ENCODE measurements at regions of chr3 and their contacts with region 1.

Region 1: GRCh38 chr3:141561426-141562034 is 74.7 kb downstream of the RASA2 start:
- DNase-seq: peak in 7 of 9 donors; percentile 59 to 78 (median 73)
- ATAC-seq: peak; percentile 80
- H3K4me3 ChIP-seq: no peak overlapping the region
- H3K4me3 Mint-ChIP-seq: peak overlapping the region in 4 of 10 donors; percentile 17 to 54 (median 32)
- H3K27ac ChIP-seq: peak overlapping the region; percentile 25
- H3K27ac Mint-ChIP-seq: peak overlapping the region in 8 of 9 donors; percentile 55 to 89 (median 76)
- H3K4me1 ChIP-seq: peaks cover 0 to 37% of the 10 kb centered on the region in 2 donors
- H3K4me1 Mint-ChIP-seq: peaks cover 11 to 47% (median 24%) of the 10 kb centered on the region in 7 donors
- H3K27me3 ChIP-seq: no peaks in the 10 kb centered on the region
- H3K27me3 Mint-ChIP-seq: no peaks in the 10 kb centered on the region

Region 2: DNA sequence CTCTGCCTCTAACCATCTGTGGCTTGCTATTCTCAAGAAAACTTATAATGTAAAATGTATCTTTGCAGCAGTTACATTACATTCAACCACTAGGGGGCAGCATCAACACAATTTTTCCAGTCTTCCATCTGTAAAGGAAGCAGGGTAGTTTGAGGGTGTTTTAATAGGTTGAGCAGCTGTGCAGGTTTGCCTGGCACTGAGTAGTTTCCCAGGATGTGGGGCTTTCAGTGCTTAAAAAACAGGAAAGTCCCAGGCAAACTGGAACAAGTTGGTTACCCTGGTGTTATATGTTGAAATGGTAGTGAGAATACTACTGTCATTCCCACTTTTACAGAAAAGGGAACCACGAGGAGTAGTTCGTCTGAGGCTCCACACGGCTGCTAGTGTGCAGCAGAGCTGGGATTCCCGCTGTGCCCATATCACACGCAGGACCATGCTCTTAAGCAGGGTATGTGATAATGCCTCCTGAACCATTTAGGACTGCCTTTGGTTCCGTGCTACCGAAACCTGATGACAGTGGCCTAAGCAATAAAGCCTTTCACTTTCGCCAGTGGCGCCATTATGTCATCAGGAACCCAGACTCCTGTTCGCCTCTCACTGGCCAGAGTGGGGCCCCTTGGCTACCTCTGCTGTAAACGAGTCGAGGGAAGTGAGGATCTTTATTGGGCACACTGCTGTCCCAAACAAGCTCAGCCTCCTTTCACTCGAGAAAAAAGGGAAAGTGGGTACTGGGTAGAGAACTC is 257.9 kb before region 1 on chr3:
- CTCF ChIA-PET with region 1: interaction called, 4 read pairs
- POLR2A ChIA-PET with region 1: no interaction called
- intact Hi-C with region 1: loop called (anchors 1 to 2 kb)
- DNase-seq: peak in 7 of 9 donors; percentile 62 to 84 (median 77)
- ATAC-seq: peak; percentile 77
- H3K4me3 ChIP-seq: no peak overlapping the region
- H3K4me3 Mint-ChIP-seq: peak overlapping the region in 1 of 10 donors; percentile 3
- H3K27ac ChIP-seq: no peak overlapping the region
- H3K27ac Mint-ChIP-seq: peak overlapping the region in 5 of 9 donors; percentile 4 to 84 (median 50)
- H3K4me1 ChIP-seq: peaks cover 20 to 57% of the 10 kb centered on the region in 2 donors
- H3K4me1 Mint-ChIP-seq: peaks cover 30 to 90% (median 80%) of the 10 kb centered on the region in 7 donors
- H3K27me3 ChIP-seq: no peaks in the 10 kb centered on the region
- H3K27me3 Mint-ChIP-seq: peaks cover 0 to 5% (median 0%) of the 10 kb centered on the region in 5 donors

Region 3: DNA sequence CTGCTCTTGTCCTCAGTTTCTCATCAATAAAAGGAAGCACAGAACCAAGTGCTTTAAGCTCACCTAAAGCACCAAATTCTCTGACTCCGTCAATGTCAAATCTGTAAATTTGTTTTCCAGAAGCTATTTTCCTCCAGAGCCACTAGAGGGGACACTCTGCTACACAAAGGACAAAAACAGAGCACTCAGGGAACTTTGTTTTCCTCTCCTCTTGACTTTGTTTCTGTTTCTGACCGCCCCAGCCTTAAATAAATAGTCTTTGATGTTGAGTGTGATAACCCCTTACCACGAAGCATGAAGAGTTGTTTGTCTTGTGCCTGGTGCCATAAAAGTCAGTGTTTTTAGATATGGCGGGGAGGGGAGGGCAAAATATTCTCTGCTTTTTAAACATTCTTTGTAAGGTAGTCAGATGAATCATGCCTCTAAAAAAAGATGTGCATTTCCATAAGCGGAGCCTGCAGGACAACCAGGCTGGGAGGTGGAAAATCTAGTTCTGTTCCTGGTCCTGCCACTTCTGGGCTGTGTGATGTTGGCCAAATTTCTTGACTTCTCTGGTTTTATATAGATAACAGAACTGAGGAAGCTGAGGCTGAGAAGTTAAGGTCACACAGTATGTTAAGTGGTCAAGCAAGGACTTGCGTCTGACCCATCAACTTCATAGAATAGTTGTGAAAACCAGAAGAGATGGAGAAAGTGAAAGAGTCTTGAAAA is 200.5 kb before region 1 on chr3:
- CTCF ChIA-PET with region 1: interaction called, 3 read pairs
- POLR2A ChIA-PET with region 1: interaction called, 3 read pairs
- intact Hi-C with region 1: loop called in 1 of 2 experiments (anchors 1 kb)
- DNase-seq: peak in 7 of 9 donors; percentile 20 to 56 (median 45)
- ATAC-seq: peak; percentile 83
- H3K4me3 ChIP-seq: no peak overlapping the region
- H3K4me3 Mint-ChIP-seq: peak overlapping the region in 4 of 10 donors; percentile 16 to 40 (median 28)
- H3K27ac ChIP-seq: no peak overlapping the region
- H3K27ac Mint-ChIP-seq: peak overlapping the region in 2 of 9 donors; percentile 26 to 51
- H3K4me1 ChIP-seq: no peaks in the 10 kb centered on the region
- H3K4me1 Mint-ChIP-seq: peaks cover 5 to 9% (median 7%) of the 10 kb centered on the region in 7 donors
- H3K27me3 ChIP-seq: no peaks in the 10 kb centered on the region
- H3K27me3 Mint-ChIP-seq: peaks cover 0 to 11% (median 0%) of the 10 kb centered on the region in 5 donors

Region 4: GRCh38 chr3:141471160-141471559 is 90.4 kb before region 1 on chr3:
- CTCF ChIA-PET with region 1: interaction called, 64 read pairs
- POLR2A ChIA-PET with region 1: interaction called, 11 read pairs
- intact Hi-C with region 1: loop called (anchors 1 kb)
- DNase-seq: no peak
- ATAC-seq: no peak
- H3K4me3 ChIP-seq: no peak overlapping the region
- H3K4me3 Mint-ChIP-seq: no peak overlapping the region
- H3K27ac ChIP-seq: no peak overlapping the region
- H3K27ac Mint-ChIP-seq: no peak overlapping the region
- H3K4me1 ChIP-seq: peaks cover 4 to 5% of the 10 kb centered on the region in 2 donors
- H3K4me1 Mint-ChIP-seq: peaks cover 4 to 21% (median 18%) of the 10 kb centered on the region in 7 donors
- H3K27me3 ChIP-seq: no peaks in the 10 kb centered on the region
- H3K27me3 Mint-ChIP-seq: peaks cover 0 to 11% (median 0%) of the 10 kb centered on the region in 5 donors

Region 5: GRCh38 chr3:141477224-141477623 is 84.3 kb before region 1 on chr3:
- CTCF ChIA-PET with region 1: interaction called, 64 read pairs
- POLR2A ChIA-PET with region 1: interaction called, 11 read pairs
- intact Hi-C with region 1: loop called (anchors 1 kb)
- DNase-seq: no peak
- ATAC-seq: no peak
- H3K4me3 ChIP-seq: no peak overlapping the region
- H3K4me3 Mint-ChIP-seq: no peak overlapping the region
- H3K27ac ChIP-seq: no peak overlapping the region
- H3K27ac Mint-ChIP-seq: no peak overlapping the region
- H3K4me1 ChIP-seq: peaks cover 11% of the 10 kb centered on the region in 2 donors
- H3K4me1 Mint-ChIP-seq: peaks cover 24 to 46% (median 32%) of the 10 kb centered on the region in 7 donors
- H3K27me3 ChIP-seq: no peaks in the 10 kb centered on the region
- H3K27me3 Mint-ChIP-seq: peaks cover 0 to 21% (median 0%) of the 10 kb centered on the region in 5 donors

Region 6: DNA sequence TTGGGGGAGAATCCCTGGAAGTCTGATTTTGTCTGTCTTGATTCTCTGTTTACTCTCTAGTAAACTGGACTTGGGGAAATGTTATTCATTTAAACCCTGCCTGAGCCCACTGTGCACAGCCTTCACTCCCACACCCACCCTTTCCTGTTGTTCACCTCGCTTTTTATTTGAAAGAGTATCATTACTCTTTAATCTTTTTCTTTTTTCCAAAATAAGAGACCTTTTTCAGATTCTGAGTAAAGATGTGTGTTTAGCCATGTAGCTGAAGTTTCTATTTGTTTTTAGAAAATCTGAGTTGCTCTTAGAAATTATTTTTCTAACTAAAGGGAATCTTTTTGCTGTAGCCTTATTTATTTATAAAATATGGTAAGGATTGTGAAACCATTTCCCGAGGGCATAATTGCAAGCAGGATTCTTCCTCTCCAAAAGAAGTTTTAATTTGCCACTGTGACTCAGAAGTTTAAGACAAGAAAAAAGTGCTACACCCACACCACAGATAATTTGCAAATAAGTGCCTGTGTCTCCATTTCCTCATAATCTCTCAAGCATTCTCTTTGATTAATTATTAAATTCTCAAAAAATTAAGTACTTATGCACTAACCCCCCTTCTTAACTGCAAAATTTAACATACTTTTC is 31.3 kb before region 1 on chr3:
- CTCF ChIA-PET with region 1: interaction called, 4 read pairs
- POLR2A ChIA-PET with region 1: interaction called, 3 read pairs
- intact Hi-C with region 1: loop called in 1 of 2 experiments (anchors 1 kb)
- DNase-seq: peak in 6 of 9 donors; percentile 44 to 74 (median 60)
- ATAC-seq: peak; percentile 87
- H3K4me3 ChIP-seq: peak overlapping the region; percentile 4
- H3K4me3 Mint-ChIP-seq: peak overlapping the region; percentile 40 to 94 (median 82)
- H3K27ac ChIP-seq: peak overlapping the region; percentile 62
- H3K27ac Mint-ChIP-seq: peak overlapping the region in 8 of 9 donors; percentile 87 to 97 (median 94)
- H3K4me1 ChIP-seq: peaks cover 22 to 77% of the 10 kb centered on the region in 2 donors
- H3K4me1 Mint-ChIP-seq: peaks cover 40 to 86% (median 83%) of the 10 kb centered on the region in 7 donors
- H3K27me3 ChIP-seq: no peaks in the 10 kb centered on the region
- H3K27me3 Mint-ChIP-seq: no peaks in the 10 kb centered on the region

Region 7: GRCh38 chr3:141632779-141633374 is 71.3 kb after region 1 on chr3:
- CTCF ChIA-PET with region 1: no interaction called
- POLR2A ChIA-PET with region 1: no interaction called
- intact Hi-C with region 1: no loop called
- DNase-seq: no peak
- ATAC-seq: no peak
- H3K4me3 ChIP-seq: no peak overlapping the region
- H3K4me3 Mint-ChIP-seq: no peak overlapping the region
- H3K27ac ChIP-seq: no peak overlapping the region
- H3K27ac Mint-ChIP-seq: no peak overlapping the region
- H3K4me1 ChIP-seq: no peaks in the 10 kb centered on the region
- H3K4me1 Mint-ChIP-seq: no peaks in the 10 kb centered on the region
- H3K27me3 ChIP-seq: no peaks in the 10 kb centered on the region
- H3K27me3 Mint-ChIP-seq: peaks cover 0 to 13% (median 0%) of the 10 kb centered on the region in 5 donors

Measured in naive thymus-derived CD4-positive, alpha-beta T cell (primary cell).